ENCODE measurements at regions of chr7 and their contacts with region 1.

Region 1: DNA sequence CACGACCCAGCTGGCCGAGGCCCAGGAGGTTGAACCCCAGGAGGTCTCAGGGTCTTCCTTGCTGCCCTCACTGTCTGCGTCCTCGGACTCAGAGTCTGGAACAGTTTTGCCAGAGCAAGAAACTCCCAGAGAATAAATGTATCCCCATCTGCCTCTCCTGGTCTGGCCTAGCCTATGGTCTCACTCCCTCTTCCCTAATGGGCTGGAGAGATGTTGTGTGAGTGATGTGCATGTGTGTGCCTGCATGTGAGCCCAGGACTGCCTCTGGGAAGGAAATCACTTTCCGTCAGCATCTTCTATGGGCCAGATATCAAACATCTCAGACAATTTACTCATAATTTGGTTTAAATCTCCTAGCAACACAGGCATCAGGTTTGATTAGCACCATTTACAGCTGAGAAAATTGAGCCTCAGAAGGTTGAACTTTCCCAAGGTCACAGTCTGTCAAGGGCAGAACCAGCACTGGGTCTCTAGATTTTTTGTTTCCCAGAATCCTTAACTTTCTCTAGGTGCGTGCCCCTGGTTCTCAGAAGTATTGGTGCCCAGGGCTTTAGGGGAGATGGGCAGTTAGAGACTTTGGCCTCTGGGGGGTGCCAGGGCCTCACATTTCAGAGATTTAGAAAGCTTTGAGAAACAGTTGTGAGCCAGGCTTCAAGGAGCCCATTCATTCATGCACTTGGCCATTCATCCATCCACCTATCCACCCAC is 4.9 kb downstream of the TMEM270 start:
- DNase-seq: peak; percentile 51 to 69
- ATAC-seq: peak; percentile 68 to 90 (median 77)
- H3K4me3 ChIP-seq: no peak overlapping the region
- H3K27ac ChIP-seq: no peak overlapping the region
- H3K4me1 ChIP-seq: no peaks in the 10 kb centered on the region
- H3K27me3 ChIP-seq: no peaks in the 10 kb centered on the region
- CTCF ChIP-seq: peak; percentile 64

Region 2: DNA sequence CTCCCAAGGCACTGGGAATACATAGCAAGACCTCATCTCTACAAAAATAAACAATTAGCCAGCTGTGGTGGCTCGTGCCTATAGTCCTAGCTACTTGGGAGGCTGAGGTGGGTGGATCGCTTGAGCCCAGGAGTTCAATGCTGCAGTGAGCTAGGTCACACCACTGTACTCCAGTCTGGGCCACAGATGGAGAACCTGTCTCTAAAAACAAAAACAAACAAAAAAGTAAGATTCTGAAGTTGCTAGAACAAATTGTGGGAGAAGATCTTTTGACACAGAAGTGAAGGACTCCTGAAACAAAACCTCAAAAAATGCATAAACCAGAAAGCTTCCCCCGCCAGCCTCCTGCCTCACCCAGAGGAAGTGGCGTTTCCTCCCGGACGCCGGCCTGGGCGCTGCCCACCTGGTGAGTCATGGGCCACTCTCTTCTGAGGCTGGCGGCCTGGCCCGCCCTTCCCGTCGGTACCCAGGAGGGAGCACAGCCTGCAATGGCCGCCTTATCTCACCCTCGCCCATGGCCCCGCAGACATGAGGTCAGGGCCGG is 136.7 kb after region 1 on chr7:
- intact Hi-C with region 1: no loop called
- DNase-seq: peak in 1 of 2 donors; percentile 66
- ATAC-seq: peak in 2 of 4 donors; percentile 41 to 56
- H3K4me3 ChIP-seq: no peak overlapping the region
- H3K27ac ChIP-seq: no peak overlapping the region
- H3K4me1 ChIP-seq: no peaks in the 10 kb centered on the region
- H3K27me3 ChIP-seq: peaks cover 0 to 1% (median 0%) of the 10 kb centered on the region in 3 donors
- CTCF ChIP-seq: no peak

Region 3: GRCh38 chr7:74026903-74027551 is 161.1 kb after region 1 on chr7:
- intact Hi-C with region 1: loop called (anchors 2 kb)
- DNase-seq: peak; percentile 82 to 88
- ATAC-seq: peak; percentile 54 to 74 (median 69)
- H3K4me3 ChIP-seq: peak overlapping the region; percentile 58
- H3K27ac ChIP-seq: no peak overlapping the region
- H3K4me1 ChIP-seq: peaks cover 22% of the 10 kb centered on the region
- H3K27me3 ChIP-seq: peaks cover 0 to 5% (median 0%) of the 10 kb centered on the region in 3 donors
- CTCF ChIP-seq: peak; percentile 91

Measured in psoas muscle (tissue), 8 donors.